ENCODE measurements at regions of chr6 and their contacts with region 1.

Region 1: DNA sequence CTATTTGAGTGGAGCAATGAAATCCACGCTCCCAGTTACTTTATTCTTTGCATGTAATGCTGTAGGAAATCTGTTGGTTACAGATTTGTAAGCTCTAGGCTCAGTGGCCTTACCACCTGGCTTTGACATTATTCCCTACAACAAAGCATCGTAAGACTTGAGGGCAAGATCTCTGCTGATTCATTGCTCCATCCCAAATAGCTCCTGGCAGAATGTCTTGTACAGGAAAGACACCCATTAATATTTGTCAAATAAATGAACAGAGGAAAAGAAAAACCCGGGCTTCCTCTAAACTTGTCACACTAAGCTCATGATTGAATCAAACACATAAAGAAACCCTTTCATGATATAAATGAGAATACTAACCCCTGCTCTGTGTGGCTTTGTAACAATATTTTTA is 357.5 kb upstream of the RNF217 start:
- DNase-seq: no peak
- H3K4me3 ChIP-seq: no peak overlapping the region
- H3K27ac ChIP-seq: no peak overlapping the region
- H3K4me1 ChIP-seq: no peaks in the 10 kb centered on the region
- H3K27me3 ChIP-seq: no peaks in the 10 kb centered on the region
- CTCF ChIP-seq: no peak
- POLR2A ChIP-seq: no peak

Region 2: DNA sequence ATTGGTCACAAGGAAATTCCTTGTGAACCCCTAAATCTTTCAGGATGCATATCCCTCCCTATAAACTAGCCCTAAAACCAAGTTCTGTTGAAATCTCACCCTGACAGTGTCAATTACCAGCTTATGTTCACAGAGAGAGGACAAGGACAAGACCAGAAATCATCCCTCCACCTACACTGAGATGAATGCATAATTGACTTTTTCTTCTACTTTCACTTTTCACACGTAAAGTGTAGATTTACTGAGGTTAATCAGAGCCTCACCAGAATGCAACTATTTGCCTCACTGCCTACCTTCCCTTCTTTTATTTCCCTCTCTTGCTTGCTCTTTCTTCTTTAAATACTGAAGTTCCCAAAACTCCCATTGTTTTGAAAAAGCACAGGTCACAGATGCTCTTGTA is 816.4 kb before region 1 on chr6:
- intact Hi-C with region 1: no loop called
- DNase-seq: no peak
- H3K4me3 ChIP-seq: no peak overlapping the region
- H3K27ac ChIP-seq: no peak overlapping the region
- H3K4me1 ChIP-seq: no peaks in the 10 kb centered on the region
- H3K27me3 ChIP-seq: no peaks in the 10 kb centered on the region
- CTCF ChIP-seq: no peak
- POLR2A ChIP-seq: no peak

Region 3: GRCh38 chr6:123953920-123954319 is 650.8 kb before region 1 on chr6:
- intact Hi-C with region 1: loop called in 1 of 2 experiments (anchors 10 kb)
- DNase-seq: peak in 6 of 7 donors; percentile 19 to 53 (median 28)
- H3K4me3 ChIP-seq: no peak overlapping the region
- H3K27ac ChIP-seq: no peak overlapping the region
- H3K4me1 ChIP-seq: no peaks in the 10 kb centered on the region
- H3K27me3 ChIP-seq: no peaks in the 10 kb centered on the region
- CTCF ChIP-seq: no peak
- POLR2A ChIP-seq: no peak

Measured in adrenal gland (tissue), 19 donors.